Endothelial cell of umbilical vein (primary cell): ENCODE measurements at regions of chr3 and their contacts with region 1.

Region 1: GRCh38 chr3:117580806-117581205 is 871.2 kb downstream of the TUSC7 start:
- DNase-seq: no peak
- H3K4me3 ChIP-seq: no peak overlapping the region
- H3K27ac ChIP-seq: no peak overlapping the region
- H3K4me1 ChIP-seq: no peaks in the 10 kb centered on the region
- H3K27me3 ChIP-seq: peaks cover 0 to 3% of the 10 kb centered on the region in 2 experiments
- CTCF ChIP-seq: no peak
- POLR2A ChIP-seq: no peak

Region 2: GRCh38 chr3:117302428-117302827 is 278.4 kb before region 1 on chr3:
- CTCF ChIA-PET with region 1: no interaction called
- POLR2A ChIA-PET with region 1: no interaction called
- dilution Hi-C with region 1: no loop called
- intact Hi-C with region 1: no loop called
- DNase-seq: no peak
- H3K4me3 ChIP-seq: no peak overlapping the region
- H3K27ac ChIP-seq: no peak overlapping the region
- H3K4me1 ChIP-seq: no peaks in the 10 kb centered on the region
- H3K27me3 ChIP-seq: no peaks in the 10 kb centered on the region
- CTCF ChIP-seq: no peak
- POLR2A ChIP-seq: no peak

Region 3: DNA sequence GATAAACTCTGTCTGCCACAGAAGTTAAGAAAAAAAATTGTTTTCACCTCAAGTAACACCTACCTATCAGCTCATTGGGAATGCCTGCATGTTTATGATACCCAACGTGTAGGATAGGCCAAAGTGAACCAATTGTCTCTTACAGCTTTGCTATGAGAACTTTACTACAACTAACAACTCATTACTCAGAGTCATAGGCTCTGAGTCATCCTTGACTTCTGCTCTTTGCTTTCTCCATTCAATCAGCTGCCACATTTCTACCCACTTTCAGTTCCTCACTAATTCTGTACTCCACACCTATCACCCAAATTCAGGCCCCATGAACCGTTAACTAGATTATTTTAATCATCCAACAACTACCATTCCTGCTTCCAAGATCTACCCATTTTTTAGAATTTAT is 27.3 kb before region 1 on chr3:
- CTCF ChIA-PET with region 1: no interaction called
- POLR2A ChIA-PET with region 1: no interaction called
- dilution Hi-C with region 1: no loop called
- intact Hi-C with region 1: no loop called
- DNase-seq: peak; percentile 12
- H3K4me3 ChIP-seq: no peak overlapping the region
- H3K27ac ChIP-seq: no peak overlapping the region
- H3K4me1 ChIP-seq: no peaks in the 10 kb centered on the region
- H3K27me3 ChIP-seq: no peaks in the 10 kb centered on the region
- CTCF ChIP-seq: no peak
- POLR2A ChIP-seq: no peak

Region 4: DNA sequence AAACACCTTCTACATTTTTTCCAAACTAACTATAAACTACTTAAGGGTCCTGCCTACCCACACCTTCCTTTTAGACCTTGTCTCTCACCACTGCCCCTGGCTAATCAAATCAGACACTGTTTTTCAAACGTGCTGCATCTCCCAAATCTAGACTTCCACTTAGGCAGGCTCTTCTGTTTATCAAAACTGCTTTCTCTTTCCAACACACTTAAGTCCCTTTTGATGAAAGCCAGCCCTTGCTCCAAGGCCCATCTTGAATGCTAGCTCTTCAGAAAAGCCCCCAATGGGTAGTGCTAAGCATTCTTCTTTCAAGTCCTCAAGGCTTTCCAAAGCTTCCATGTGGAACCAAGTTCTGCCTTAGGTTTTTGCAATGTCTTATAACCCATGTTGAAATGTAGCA is 17.1 kb after region 1 on chr3:
- CTCF ChIA-PET with region 1: no interaction called
- POLR2A ChIA-PET with region 1: interaction called, 11 read pairs
- dilution Hi-C with region 1: no loop called
- intact Hi-C with region 1: no loop called
- DNase-seq: no peak
- H3K4me3 ChIP-seq: no peak overlapping the region
- H3K27ac ChIP-seq: no peak overlapping the region
- H3K4me1 ChIP-seq: no peaks in the 10 kb centered on the region
- H3K27me3 ChIP-seq: no peaks in the 10 kb centered on the region
- CTCF ChIP-seq: no peak
- POLR2A ChIP-seq: no peak

Region 5: GRCh38 chr3:117728226-117728625 is 147.4 kb after region 1 on chr3:
- CTCF ChIA-PET with region 1: no interaction called
- POLR2A ChIA-PET with region 1: no interaction called
- dilution Hi-C with region 1: no loop called
- intact Hi-C with region 1: no loop called
- DNase-seq: no peak
- H3K4me3 ChIP-seq: no peak overlapping the region
- H3K27ac ChIP-seq: no peak overlapping the region
- H3K4me1 ChIP-seq: no peaks in the 10 kb centered on the region
- H3K27me3 ChIP-seq: no peaks in the 10 kb centered on the region
- CTCF ChIP-seq: no peak
- POLR2A ChIP-seq: no peak

Region 6: GRCh38 chr3:118036215-118036614 is 455.4 kb after region 1 on chr3:
- CTCF ChIA-PET with region 1: no interaction called
- POLR2A ChIA-PET with region 1: no interaction called
- dilution Hi-C with region 1: no loop called
- intact Hi-C with region 1: no loop called
- DNase-seq: no peak
- H3K4me3 ChIP-seq: no peak overlapping the region
- H3K27ac ChIP-seq: no peak overlapping the region
- H3K4me1 ChIP-seq: no peaks in the 10 kb centered on the region
- H3K27me3 ChIP-seq: no peaks in the 10 kb centered on the region
- CTCF ChIP-seq: no peak
- POLR2A ChIP-seq: no peak